Posterior vena cava (tissue), 2 donors: ENCODE measurements at regions of chr3 and their contacts with region 1.

Region 1: GRCh38 chr3:172476347-172476746 is 28.1 kb upstream of the GHSR start:
- DNase-seq: no peak

Region 2: GRCh38 chr3:172410702-172411477 is 65.5 kb before region 1 on chr3:
- intact Hi-C with region 1: loop called in 1 of 2 experiments (anchors 2 kb)
- DNase-seq: no peak

Region 3: DNA sequence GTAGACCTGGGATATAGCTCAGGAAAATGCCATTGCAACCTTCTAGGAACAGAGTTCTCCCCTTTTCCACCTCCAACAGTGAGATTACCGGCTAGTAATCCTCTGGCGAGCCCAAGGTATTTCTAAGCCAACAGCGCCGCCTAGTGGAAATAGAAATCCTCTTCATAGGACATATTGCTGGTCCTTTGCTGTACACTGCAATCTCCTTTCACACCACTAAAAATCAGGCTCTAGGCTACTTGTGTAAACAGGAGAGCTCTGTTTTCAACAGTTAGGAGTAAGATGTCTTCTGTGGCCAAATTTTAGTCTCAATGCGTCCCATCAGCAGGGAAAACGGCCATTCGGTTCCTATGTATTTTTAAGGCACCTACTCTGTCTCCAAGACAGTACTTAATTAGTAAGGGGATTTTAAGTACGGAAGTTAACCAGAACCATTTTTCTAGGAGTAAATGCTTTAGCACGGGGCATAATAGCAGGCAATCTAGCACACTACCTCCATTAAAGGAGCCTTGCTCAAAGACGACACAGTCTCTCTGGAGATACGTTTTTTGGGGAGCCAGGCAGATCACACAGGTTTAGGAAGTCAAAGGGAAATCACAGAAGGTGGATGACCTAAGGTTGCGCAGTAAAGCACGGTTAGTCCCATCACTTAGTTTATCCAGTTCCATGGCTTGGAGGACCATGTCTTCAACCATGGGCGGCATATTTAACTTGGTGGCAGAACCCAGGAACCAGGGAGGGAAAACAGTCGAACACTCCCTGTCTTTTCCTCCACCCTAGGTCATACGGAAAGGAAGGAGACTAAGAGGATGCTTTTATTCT is 190.7 kb after region 1 on chr3:
- intact Hi-C with region 1: loop called in 1 of 2 experiments (anchors 10 kb)
- DNase-seq: no peak